Upper lobe of right lung (tissue), 1 donor: ENCODE measurements at regions of chr10 and their contacts with region 1.

Region 1: DNA sequence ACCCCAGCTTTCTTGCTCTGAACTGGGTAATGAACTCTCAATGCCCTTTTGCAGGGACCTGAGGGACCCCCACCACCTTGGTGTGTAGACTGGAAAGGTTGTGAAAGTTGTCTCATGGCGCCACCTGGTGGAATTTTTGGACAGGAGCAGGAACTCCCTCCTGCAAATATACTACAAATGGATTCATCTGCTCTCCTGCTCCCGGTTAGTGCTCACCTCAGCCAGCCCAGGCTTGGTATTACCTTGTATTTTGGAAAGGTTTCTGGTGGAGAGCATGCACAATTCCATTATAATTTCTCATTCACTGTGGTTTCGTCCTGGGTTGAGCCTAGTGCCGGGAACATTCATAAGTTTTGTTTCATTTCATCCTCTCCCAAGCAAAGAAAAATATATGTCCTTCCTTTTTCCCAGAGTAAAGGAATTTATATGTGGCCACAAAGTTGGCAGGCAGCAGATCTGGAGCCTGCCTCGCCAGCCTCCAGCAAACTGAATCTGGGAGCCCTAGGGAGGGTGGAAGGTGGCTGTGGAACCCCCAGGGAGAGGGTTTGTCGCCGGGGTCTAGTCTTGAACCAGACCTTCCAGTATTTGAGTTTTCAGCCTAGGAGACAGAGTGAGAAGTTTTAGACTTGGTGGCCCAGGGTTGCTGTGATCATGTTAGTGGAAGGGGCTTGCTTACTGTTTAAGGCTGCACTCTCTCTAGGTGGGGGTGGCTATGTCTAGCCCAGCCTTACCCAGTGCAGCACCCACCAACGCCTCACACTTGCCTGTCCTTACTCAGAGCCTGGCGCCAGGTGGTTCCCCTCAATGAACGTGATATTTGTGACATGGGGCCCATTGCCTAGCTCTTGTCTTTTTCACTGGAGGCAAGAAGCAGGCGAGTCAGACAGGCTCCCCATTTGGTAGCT is 9.5 kb downstream of the FAM241B start:
- DNase-seq: peak; percentile 54
- ATAC-seq: peak; percentile 59
- H3K4me3 ChIP-seq: no peak overlapping the region
- H3K27ac ChIP-seq: no peak overlapping the region
- H3K4me1 ChIP-seq: no peaks in the 10 kb centered on the region
- H3K27me3 ChIP-seq: peaks cover 9% of the 10 kb centered on the region
- CTCF ChIP-seq: peak; percentile 89

Region 2: GRCh38 chr10:69262292-69262751 is 377.2 kb before region 1 on chr10:
- intact Hi-C with region 1: no loop called
- DNase-seq: no peak
- ATAC-seq: no peak
- H3K4me3 ChIP-seq: no peak overlapping the region
- H3K27ac ChIP-seq: no peak overlapping the region
- H3K4me1 ChIP-seq: no peaks in the 10 kb centered on the region
- H3K27me3 ChIP-seq: no peaks in the 10 kb centered on the region
- CTCF ChIP-seq: no peak

Region 3: DNA sequence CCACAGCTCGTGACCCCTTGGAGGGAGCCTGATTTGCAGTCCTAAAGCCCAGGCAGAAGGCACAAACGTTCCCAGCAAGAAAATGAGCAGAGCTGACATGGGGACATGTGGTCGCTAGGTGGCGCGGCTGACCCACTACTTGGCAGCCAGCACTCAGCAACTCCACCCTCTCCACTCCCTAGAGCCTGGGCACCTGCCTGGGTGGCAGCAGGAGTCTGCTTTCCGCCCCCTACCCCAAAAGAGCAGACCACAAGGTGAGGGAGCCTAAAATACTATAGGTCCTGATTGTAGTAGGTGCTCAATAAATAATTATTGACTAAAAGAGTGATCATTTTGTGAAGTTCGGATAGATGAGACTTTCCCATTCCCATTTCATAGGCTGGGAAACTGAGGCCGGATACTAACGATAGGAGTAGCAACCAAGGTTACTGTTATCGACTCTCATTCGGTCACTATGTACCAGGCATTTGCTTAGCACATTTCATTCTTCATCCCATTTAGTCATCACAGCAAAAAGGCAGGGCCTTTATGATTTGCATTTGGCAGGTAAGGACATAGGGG is 123.8 kb before region 1 on chr10:
- intact Hi-C with region 1: loop called (anchors 5 kb)
- DNase-seq: peak; percentile 86
- ATAC-seq: peak; percentile 95
- H3K4me3 ChIP-seq: no peak overlapping the region
- H3K27ac ChIP-seq: no peak overlapping the region
- H3K4me1 ChIP-seq: no peaks in the 10 kb centered on the region
- H3K27me3 ChIP-seq: no peaks in the 10 kb centered on the region
- CTCF ChIP-seq: peak; percentile 78